MCF 10A (cell line): ENCODE measurements at regions of chr4 and their contacts with region 1.

Region 1: GRCh38 chr4:94390804-94391410 is 48.3 kb upstream of the HPGDS start:
- DNase-seq: peak; percentile 41
- H3K4me3 Mint-ChIP-seq: no peak overlapping the region
- H3K27ac Mint-ChIP-seq: no peak overlapping the region
- H3K4me1 Mint-ChIP-seq: peaks cover 5% of the 10 kb centered on the region
- H3K27me3 Mint-ChIP-seq: peaks cover 22% of the 10 kb centered on the region
- CTCF ChIP-seq: peak; percentile 49

Region 2: GRCh38 chr4:94202769-94203168 is 188.1 kb before region 1 on chr4:
- CTCF ChIA-PET with region 1: no interaction called
- POLR2A ChIA-PET with region 1: no interaction called
- intact Hi-C with region 1: no loop called
- DNase-seq: no peak
- H3K4me3 Mint-ChIP-seq: no peak overlapping the region
- H3K27ac Mint-ChIP-seq: no peak overlapping the region
- H3K4me1 Mint-ChIP-seq: no peaks in the 10 kb centered on the region
- H3K27me3 Mint-ChIP-seq: no peaks in the 10 kb centered on the region
- CTCF ChIP-seq: no peak

Region 3: GRCh38 chr4:94332983-94333590 is 57.8 kb before region 1 on chr4:
- CTCF ChIA-PET with region 1: interaction called, 15 read pairs
- POLR2A ChIA-PET with region 1: no interaction called
- intact Hi-C with region 1: loop called (anchors 1 kb)
- DNase-seq: no peak
- H3K4me3 Mint-ChIP-seq: no peak overlapping the region
- H3K27ac Mint-ChIP-seq: no peak overlapping the region
- H3K4me1 Mint-ChIP-seq: peaks cover 6% of the 10 kb centered on the region
- H3K27me3 Mint-ChIP-seq: no peaks in the 10 kb centered on the region
- CTCF ChIP-seq: no peak

Region 4: GRCh38 chr4:94378047-94378446 is 12.9 kb before region 1 on chr4:
- CTCF ChIA-PET with region 1: interaction called, 21 read pairs
- POLR2A ChIA-PET with region 1: no interaction called
- intact Hi-C with region 1: no loop called
- DNase-seq: no peak
- H3K4me3 Mint-ChIP-seq: no peak overlapping the region
- H3K27ac Mint-ChIP-seq: no peak overlapping the region
- H3K4me1 Mint-ChIP-seq: no peaks in the 10 kb centered on the region
- H3K27me3 Mint-ChIP-seq: no peaks in the 10 kb centered on the region
- CTCF ChIP-seq: no peak

Region 5: GRCh38 chr4:94414907-94415306 is 24.0 kb after region 1 on chr4:
- CTCF ChIA-PET with region 1: no interaction called
- POLR2A ChIA-PET with region 1: no interaction called
- intact Hi-C with region 1: no loop called
- DNase-seq: no peak
- H3K4me3 Mint-ChIP-seq: no peak overlapping the region
- H3K27ac Mint-ChIP-seq: no peak overlapping the region
- H3K4me1 Mint-ChIP-seq: peaks cover 29% of the 10 kb centered on the region
- H3K27me3 Mint-ChIP-seq: no peaks in the 10 kb centered on the region
- CTCF ChIP-seq: no peak